Heart right ventricle (tissue), 16 donors: ENCODE measurements at regions of chr9 and their contacts with region 1.

Region 1: GRCh38 chr9:11206925-11207324 is 594.1 kb upstream of the PTPRD start:
- DNase-seq: no peak
- ATAC-seq: no peak
- H3K4me3 ChIP-seq: no peak overlapping the region
- H3K27ac ChIP-seq: no peak overlapping the region
- H3K4me1 ChIP-seq: no peaks in the 10 kb centered on the region
- H3K27me3 ChIP-seq: no peaks in the 10 kb centered on the region
- CTCF ChIP-seq: no peak

Region 2: GRCh38 chr9:11194246-11194645 is 12.7 kb before region 1 on chr9:
- intact Hi-C with region 1: loop called in 1 of 10 experiments (anchors 1 kb)
- DNase-seq: no peak
- ATAC-seq: peak in 1 of 8 donors; percentile 44
- H3K4me3 ChIP-seq: no peak overlapping the region
- H3K27ac ChIP-seq: no peak overlapping the region
- H3K4me1 ChIP-seq: no peaks in the 10 kb centered on the region
- H3K27me3 ChIP-seq: no peaks in the 10 kb centered on the region
- CTCF ChIP-seq: no peak